GM13977 (cell line): ENCODE measurements at regions of chr1 and their contacts with region 1.

Region 1: GRCh38 chr1:108130794-108131193 is 69.3 kb downstream of the SLC25A24 start:
- DNase-seq: no peak
- CTCF ChIP-seq: no peak

Region 2: DNA sequence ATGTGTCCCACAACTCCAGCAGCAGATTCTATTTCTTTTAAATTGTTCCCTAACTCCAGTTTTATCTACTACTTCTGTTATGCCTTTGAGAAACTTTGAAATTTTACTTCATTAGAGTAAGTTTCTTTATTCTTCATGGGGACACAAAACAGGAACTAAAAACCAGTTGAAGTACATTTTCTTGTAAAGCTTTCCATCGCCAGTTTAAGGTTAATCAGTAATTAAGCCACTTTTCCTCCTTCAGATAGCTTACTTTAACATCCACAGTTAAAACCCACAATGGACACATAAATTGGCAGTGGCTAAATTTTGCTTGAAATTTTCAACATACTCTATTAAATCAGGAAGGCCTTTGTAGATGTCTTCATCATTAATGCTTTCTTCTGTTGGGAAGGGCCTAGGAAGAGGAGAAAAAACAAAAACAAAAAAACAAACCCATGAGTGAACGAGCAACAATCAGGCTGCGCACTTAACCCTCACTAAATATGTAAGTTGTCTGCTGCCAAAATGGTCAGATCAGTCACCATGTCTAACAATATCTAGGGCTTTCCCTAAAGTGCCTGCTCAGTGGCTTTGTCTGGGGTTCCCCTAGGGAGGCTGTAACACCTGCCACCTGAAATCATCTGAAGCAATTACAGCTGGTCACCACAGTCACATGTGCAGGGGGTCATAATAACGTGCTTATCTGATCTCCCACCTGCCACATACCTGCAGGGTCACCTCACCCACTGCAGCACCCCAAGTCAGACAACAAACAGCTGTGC is 353.7 kb before region 1 on chr1:
- in situ Hi-C with region 1: loop called (anchors 10 kb)
- DNase-seq: peak; percentile 50
- CTCF ChIP-seq: no peak